Activated CD8-positive, alpha-beta T cell treated with anti-CD3 and anti-CD28 coated beads, Interleukin-2, amount 10 ng/mL, durations not matched to agents 7 days and 5 days (primary cell): ENCODE measurements at regions of chr5 and their contacts with region 1.

Region 1: DNA sequence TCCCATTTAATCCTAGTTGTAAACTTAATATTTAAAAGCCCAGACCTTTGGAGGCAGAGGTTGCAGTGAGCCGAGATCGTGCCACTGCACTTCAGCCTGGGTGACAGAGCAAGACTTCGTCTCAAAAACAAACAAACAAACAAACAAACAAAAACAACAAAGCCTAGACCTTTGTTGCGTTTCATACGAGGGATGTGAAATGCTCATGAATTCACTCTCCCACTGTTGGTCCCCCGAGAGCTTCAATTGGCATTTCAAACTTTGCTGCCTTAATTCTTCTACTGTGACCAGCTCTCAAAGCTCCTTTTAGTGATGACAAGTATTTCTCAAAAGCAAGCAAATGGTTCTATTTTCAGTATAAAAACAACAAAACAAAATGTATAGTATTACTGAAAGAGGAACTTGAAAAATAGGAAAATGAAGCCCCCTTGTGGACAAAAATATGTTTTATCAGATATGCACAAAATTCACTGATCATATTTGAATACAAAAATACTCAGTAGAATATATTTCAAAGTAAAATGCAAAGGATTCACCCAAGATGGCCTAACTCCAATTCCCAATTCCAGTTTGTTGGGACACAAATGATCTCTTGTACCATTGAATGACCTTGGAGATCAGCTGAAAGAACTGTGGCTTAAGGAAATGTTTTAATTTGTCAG is 140.4 kb downstream of the ESM1 start:
- DNase-seq: no peak
- ATAC-seq: peak; percentile 49
- H3K4me3 Mint-ChIP-seq: peak overlapping the region; percentile 20
- H3K27ac Mint-ChIP-seq: no peak overlapping the region
- H3K4me1 Mint-ChIP-seq: peaks cover 15% of the 10 kb centered on the region
- H3K27me3 Mint-ChIP-seq: peaks cover 13% of the 10 kb centered on the region

Region 2: DNA sequence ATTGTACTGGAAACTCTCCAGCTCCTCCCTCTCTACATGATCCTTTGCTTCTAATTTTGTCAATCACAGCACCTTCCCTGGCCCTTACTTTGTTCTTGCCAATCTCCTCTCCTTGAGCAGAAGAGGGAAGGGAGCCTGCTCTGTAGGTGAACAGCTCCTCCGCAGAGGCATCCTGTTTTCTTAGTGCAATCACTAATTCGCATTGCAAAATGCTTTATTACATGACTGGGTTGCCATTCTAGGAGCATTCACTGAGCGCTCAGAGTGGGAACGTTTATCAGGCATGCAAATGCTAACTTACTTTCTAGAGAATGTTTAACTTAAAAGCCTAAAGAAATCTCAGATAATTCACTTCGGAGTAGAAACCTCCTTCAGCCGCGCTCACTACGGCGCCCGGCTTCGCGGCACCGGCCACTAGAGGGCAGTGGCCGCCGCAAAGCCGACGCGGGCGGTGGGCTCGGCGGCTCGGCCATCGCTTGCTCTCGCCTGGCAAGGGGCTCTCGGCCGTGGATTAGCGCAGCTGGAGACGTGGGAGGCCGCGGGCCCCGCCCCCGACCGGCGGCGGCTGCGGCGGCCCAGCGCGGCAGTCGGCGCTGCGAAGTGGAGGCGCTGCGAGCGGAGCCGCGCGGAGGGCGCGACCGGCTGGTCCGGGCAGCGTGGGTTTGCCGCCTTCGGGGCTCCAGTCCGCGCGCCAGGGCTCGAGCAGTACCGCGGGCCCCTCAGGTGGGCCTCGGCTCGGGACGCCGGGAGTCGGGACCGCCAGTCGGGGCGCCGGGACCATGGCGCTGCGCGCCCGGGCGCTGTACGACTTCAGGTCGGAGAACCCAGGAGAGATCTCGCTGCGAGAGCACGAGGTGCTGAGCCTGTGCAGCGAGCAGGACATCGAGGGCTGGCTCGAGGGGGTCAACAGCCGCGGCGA is 327.6 kb before region 1 on chr5 and contains the start of gene SNX18:
- CTCF ChIA-PET with region 1: interaction called, 142 read pairs
- POLR2A ChIA-PET with region 1: interaction called, 8 read pairs
- DNase-seq: peak; percentile 93
- ATAC-seq: peak; percentile 91
- H3K4me3 Mint-ChIP-seq: peak within 1 kb of the TSS; percentile 79
- H3K27ac Mint-ChIP-seq: no peak within 1 kb of the TSS
- H3K4me1 Mint-ChIP-seq: peaks cover 39% of the 10 kb centered on the region
- H3K27me3 Mint-ChIP-seq: peaks cover 19% of the 10 kb centered on the region
- total RNA-seq, gene SNX18: 17.1 to 19.3 TPM

Region 3: GRCh38 chr5:54743997-54744788 is 100.8 kb before region 1 on chr5:
- CTCF ChIA-PET with region 1: interaction called, 10 read pairs
- POLR2A ChIA-PET with region 1: no interaction called
- DNase-seq: peak; percentile 67
- ATAC-seq: peak; percentile 83
- H3K4me3 Mint-ChIP-seq: peak overlapping the region; percentile 39
- H3K27ac Mint-ChIP-seq: peak overlapping the region; percentile 81
- H3K4me1 Mint-ChIP-seq: peaks cover 31% of the 10 kb centered on the region
- H3K27me3 Mint-ChIP-seq: peaks cover 4% of the 10 kb centered on the region

Region 4: GRCh38 chr5:54820346-54821134 is 24.5 kb before region 1 on chr5:
- CTCF ChIA-PET with region 1: interaction called, 14 read pairs
- POLR2A ChIA-PET with region 1: no interaction called
- DNase-seq: no peak
- ATAC-seq: no peak
- H3K4me3 Mint-ChIP-seq: no peak overlapping the region
- H3K27ac Mint-ChIP-seq: no peak overlapping the region
- H3K4me1 Mint-ChIP-seq: no peaks in the 10 kb centered on the region
- H3K27me3 Mint-ChIP-seq: peaks cover 17% of the 10 kb centered on the region

Region 5: DNA sequence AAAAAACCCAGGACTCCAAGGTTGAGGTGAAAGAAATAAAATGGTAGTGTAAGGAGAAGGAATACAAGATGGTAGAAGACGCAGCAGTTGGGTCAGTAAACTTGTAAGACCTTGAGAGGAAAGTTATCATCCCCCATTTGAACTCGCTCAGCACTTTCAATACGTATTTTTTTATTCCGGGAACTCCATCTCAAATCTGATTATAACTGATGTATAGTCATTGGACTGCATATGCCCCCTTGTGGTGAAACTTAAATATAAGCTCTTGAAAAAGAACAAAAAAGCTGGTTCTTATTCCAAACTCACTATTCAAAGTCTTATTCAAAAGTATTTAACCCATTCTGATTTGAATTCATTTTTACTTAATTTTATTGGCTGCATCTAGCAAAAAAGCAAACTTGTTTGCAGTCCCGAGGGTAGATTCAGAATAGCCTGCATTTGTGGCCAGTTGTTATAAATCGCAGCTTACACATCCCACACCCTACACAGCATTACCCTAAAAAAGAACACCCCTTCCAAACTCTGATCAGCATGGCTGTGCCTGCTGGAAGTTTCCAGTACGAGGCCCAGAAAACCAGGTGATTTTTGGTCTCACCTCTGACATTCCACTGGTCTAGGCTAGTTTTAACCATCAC is 22.4 kb after region 1 on chr5:
- CTCF ChIA-PET with region 1: interaction called, 36 read pairs
- POLR2A ChIA-PET with region 1: no interaction called
- DNase-seq: no peak
- ATAC-seq: peak; percentile 49
- H3K4me3 Mint-ChIP-seq: no peak overlapping the region
- H3K27ac Mint-ChIP-seq: no peak overlapping the region
- H3K4me1 Mint-ChIP-seq: peaks cover 20% of the 10 kb centered on the region
- H3K27me3 Mint-ChIP-seq: peaks cover 41% of the 10 kb centered on the region

Region 6: GRCh38 chr5:54969856-54970828 is 125.1 kb after region 1 on chr5:
- CTCF ChIA-PET with region 1: no interaction called
- POLR2A ChIA-PET with region 1: no interaction called
- DNase-seq: no peak
- ATAC-seq: no peak
- H3K4me3 Mint-ChIP-seq: no peak overlapping the region
- H3K27ac Mint-ChIP-seq: no peak overlapping the region
- H3K4me1 Mint-ChIP-seq: peaks cover under 1% of the 10 kb centered on the region
- H3K27me3 Mint-ChIP-seq: peaks cover 17% of the 10 kb centered on the region

Region 7: GRCh38 chr5:55159763-55160492 is 314.9 kb after region 1 on chr5 and contains the start of gene GPX8:
- CTCF ChIA-PET with region 1: interaction called, 22 read pairs
- POLR2A ChIA-PET with region 1: no interaction called
- DNase-seq: peak; percentile 61
- ATAC-seq: peak; percentile 70
- H3K4me3 Mint-ChIP-seq: no peak within 1 kb of the TSS
- H3K27ac Mint-ChIP-seq: no peak within 1 kb of the TSS
- H3K4me1 Mint-ChIP-seq: peaks cover 4% of the 10 kb centered on the region
- H3K27me3 Mint-ChIP-seq: peaks cover 47% of the 10 kb centered on the region
- total RNA-seq, gene GPX8: not detected

Region 8: GRCh38 chr5:55324815-55325418 is 479.9 kb after region 1 on chr5:
- CTCF ChIA-PET with region 1: no interaction called
- POLR2A ChIA-PET with region 1: no interaction called
- DNase-seq: no peak
- ATAC-seq: peak; percentile 67
- H3K4me3 Mint-ChIP-seq: no peak overlapping the region
- H3K27ac Mint-ChIP-seq: no peak overlapping the region
- H3K4me1 Mint-ChIP-seq: peaks cover 12% of the 10 kb centered on the region
- H3K27me3 Mint-ChIP-seq: no peaks in the 10 kb centered on the region

Region 9: DNA sequence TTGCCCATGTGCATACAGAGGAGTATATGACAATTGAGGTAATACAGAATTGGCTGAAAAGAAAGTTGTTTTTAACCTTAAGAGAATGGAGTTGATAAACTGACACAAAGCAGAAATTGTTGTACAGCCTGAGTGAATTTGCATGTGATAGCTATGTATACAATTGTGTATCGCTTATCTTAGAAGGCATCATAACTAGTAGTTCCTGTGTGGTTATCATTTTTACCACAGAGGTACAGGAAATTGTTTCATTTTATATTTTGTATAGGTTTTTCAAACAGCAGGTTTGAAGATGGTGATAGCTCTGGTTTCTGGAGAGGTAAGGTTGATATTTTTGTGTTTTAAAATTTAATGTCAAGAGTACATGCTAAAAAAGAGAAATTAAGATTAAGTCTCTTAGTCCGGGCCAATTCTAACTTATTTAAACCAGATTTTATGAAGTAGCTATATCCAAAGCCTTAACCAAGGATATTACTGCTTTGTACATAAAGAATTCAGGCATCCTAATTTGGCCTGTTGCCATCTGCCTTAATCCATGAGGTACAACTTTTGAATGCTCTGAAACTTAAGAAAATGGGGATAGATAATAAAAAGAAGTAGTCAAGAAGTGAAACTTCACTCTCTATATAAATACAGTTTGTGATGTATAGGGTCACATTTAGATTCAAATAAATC is 918.8 kb after region 1 on chr5:
- CTCF ChIA-PET with region 1: no interaction called
- POLR2A ChIA-PET with region 1: no interaction called
- DNase-seq: no peak
- ATAC-seq: peak; percentile 97
- H3K4me3 Mint-ChIP-seq: peak overlapping the region; percentile 56
- H3K27ac Mint-ChIP-seq: peak overlapping the region; percentile 76
- H3K4me1 Mint-ChIP-seq: peaks cover 33% of the 10 kb centered on the region
- H3K27me3 Mint-ChIP-seq: peaks cover 13% of the 10 kb centered on the region